ENCODE measurements at regions of chr5 and their contacts with region 1.

Region 1: GRCh38 chr5:119287547-119288073 is 68.2 kb upstream of the TNFAIP8 start:
- DNase-seq: peak; percentile 87
- H3K4me3 Mint-ChIP-seq: peak overlapping the region; percentile 78
- H3K27ac Mint-ChIP-seq: peak overlapping the region; percentile 93
- H3K4me1 Mint-ChIP-seq: peaks cover 89% of the 10 kb centered on the region
- H3K27me3 Mint-ChIP-seq: no peaks in the 10 kb centered on the region

Region 2: GRCh38 chr5:119274767-119275130 is 12.9 kb before region 1 on chr5:
- intact Hi-C with region 1: loop called (anchors 1 kb)
- DNase-seq: peak; percentile 78
- H3K4me3 Mint-ChIP-seq: peak overlapping the region; percentile 95
- H3K27ac Mint-ChIP-seq: peak overlapping the region; percentile 95
- H3K4me1 Mint-ChIP-seq: peaks cover 89% of the 10 kb centered on the region
- H3K27me3 Mint-ChIP-seq: no peaks in the 10 kb centered on the region

Region 3: GRCh38 chr5:119300311-119300670 is 12.7 kb after region 1 on chr5:
- intact Hi-C with region 1: loop called (anchors 1 kb)
- DNase-seq: no peak
- H3K4me3 Mint-ChIP-seq: peak overlapping the region; percentile 92
- H3K27ac Mint-ChIP-seq: peak overlapping the region; percentile 98
- H3K4me1 Mint-ChIP-seq: peaks cover 60% of the 10 kb centered on the region
- H3K27me3 Mint-ChIP-seq: no peaks in the 10 kb centered on the region